Activated B cell treated with CpG ODN at 0.5 μM for 24 hours (primary cell): ENCODE measurements at regions of chr20 and their contacts with region 1.

Region 1: DNA sequence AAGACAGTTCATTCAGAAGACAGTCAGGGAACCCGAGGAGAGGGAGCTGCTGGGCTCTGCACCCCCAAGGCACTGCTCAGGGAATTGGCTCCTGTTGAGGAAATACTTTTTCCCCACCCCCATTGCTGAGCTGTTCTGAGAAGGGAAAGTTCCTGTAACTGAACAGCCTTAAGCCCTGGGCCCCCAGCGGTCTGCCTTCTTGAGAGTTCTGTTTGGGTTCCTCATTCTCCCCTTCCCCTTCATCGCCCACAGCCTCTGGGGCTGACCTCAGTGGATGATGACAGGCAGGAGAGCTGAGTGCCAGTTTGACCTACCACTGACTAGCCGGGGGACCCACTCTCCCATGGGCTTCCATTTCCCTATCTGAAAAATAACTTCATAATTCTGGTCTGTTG is 10.7 kb downstream of the HCK start:
- DNase-seq: no peak
- ATAC-seq: peak; percentile 84
- H3K4me3 Mint-ChIP-seq: peak overlapping the region; percentile 35
- H3K27ac Mint-ChIP-seq: peak overlapping the region; percentile 75
- H3K4me1 Mint-ChIP-seq: peaks cover 54% of the 10 kb centered on the region
- H3K27me3 Mint-ChIP-seq: no peaks in the 10 kb centered on the region
- CTCF ChIP-seq: no peak

Region 2: DNA sequence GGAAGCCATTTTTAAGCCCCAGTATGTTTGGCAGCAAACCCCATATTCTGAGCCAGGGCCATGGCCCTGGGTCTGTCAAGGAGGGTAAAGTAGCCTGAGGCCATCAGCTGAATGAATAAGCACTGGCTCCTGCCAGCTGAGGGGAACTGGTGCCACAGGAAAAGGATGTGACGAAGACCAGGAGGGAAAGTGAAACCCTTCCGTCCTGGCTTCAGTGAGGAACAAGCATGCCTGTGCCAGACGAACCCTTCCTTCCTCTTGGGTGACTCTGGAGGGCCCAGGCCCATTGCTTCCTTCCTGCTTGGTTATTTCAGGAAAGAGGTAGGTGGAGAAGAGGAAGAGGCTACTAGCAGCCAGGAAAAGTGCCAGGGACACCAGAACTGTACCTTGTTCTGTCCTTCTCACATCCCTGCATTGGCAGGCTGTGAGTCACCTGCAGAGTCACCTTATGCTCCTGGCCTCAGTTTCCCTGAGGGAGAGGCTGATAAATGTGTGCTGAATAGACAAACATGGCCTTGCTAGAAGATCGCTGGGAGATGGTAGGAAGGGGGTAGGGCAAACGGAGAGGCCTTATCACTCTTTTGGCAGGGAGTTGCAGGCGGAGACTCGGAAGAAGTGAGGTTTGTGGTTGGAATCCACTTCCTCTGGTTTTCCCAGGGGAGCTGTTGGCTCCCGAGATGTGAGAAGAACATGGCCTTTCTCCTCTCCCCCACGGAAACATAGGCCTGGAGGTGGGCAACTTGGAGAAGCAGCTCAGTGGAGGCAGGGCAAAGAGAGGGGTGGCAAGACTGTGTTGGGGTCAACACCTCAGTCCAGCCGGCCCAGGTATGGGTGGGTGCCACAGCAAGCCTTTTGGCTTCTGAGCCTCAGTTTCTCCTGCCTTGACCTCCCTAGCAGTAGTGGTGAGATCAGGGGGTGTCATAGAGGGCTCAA is 387.6 kb before region 1 on chr20:
- CTCF ChIA-PET with region 1: no interaction called
- POLR2A ChIA-PET with region 1: no interaction called
- intact Hi-C with region 1: no loop called
- DNase-seq: peak; percentile 26
- ATAC-seq: peak; percentile 82
- H3K4me3 Mint-ChIP-seq: peak overlapping the region; percentile 89
- H3K27ac Mint-ChIP-seq: peak overlapping the region; percentile 94
- H3K4me1 Mint-ChIP-seq: peaks cover 44% of the 10 kb centered on the region
- H3K27me3 Mint-ChIP-seq: no peaks in the 10 kb centered on the region
- CTCF ChIP-seq: no peak

Region 3: GRCh38 chr20:32040142-32041022 is 22.4 kb before region 1 on chr20:
- CTCF ChIA-PET with region 1: interaction called, 17 read pairs
- POLR2A ChIA-PET with region 1: interaction called, 453 read pairs
- intact Hi-C with region 1: loop called (anchors 1 kb)
- DNase-seq: peak; percentile 77
- ATAC-seq: peak; percentile 88
- H3K4me3 Mint-ChIP-seq: peak overlapping the region; percentile 78
- H3K27ac Mint-ChIP-seq: peak overlapping the region; percentile 90
- H3K4me1 Mint-ChIP-seq: peaks cover 80% of the 10 kb centered on the region
- H3K27me3 Mint-ChIP-seq: no peaks in the 10 kb centered on the region
- CTCF ChIP-seq: no peak